ENCODE measurements at regions of chr6 and their contacts with region 1.

Region 1: DNA sequence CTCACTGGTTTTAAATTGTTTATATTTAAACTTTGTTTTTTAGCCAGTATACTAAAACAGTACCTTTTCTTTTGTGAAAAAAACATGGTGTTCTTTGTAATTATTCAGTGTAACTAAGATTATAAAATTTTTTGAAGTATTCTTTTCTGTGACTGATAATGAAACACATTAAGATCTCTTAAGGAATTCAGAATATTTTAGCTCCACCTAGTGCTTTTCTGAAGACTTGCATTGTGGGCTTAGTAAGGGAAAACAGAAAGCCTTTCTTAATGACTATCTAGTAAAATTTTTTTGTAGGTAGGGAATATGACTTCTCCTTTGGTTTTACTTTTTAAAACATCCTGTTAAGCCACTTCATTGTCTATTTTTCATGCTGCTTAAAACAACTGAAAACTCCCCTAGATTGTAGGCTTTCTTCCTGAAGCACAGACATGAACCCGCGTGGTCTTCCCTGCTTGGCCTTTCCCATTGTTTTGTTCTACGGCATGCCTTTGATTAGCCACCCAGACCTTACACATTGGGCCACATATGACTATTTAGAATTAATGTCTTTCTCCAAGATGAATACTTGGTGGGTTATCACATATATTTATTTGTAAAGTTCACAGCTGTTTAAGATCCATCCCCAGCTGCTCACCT is 72.1 kb downstream of the AFDN start:
- DNase-seq: peak in 3 of 9 donors; percentile 3 to 30 (median 19)
- ATAC-seq: no peak
- H3K4me3 ChIP-seq: no peak overlapping the region
- H3K4me3 Mint-ChIP-seq: no peak overlapping the region
- H3K27ac ChIP-seq: no peak overlapping the region
- H3K27ac Mint-ChIP-seq: no peak overlapping the region
- H3K4me1 ChIP-seq: no peaks in the 10 kb centered on the region
- H3K4me1 Mint-ChIP-seq: no peaks in the 10 kb centered on the region
- H3K27me3 ChIP-seq: no peaks in the 10 kb centered on the region
- H3K27me3 Mint-ChIP-seq: peaks cover 0 to 3% (median 0%) of the 10 kb centered on the region in 5 donors

Region 2: DNA sequence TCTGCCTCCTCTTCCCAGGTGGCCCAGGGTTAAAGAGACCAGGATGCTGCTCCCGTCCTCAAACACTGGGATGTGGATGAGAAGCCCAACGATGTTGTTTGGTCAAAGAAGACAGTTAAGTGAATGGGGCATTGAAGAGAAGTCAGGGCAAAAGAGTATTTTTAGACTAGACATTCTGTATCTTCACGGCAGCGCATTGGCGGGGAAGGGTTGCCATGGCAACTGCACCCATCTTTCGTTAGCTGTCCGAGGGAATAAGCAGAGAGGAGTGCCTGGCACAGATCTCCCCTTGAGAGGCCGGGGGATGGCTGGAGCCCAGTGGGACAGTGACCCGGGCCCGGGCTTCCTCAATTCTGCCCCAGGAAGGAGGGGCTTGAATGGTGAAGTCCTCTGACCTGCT is 684.6 kb before region 1 on chr6:
- CTCF ChIA-PET with region 1: no interaction called
- POLR2A ChIA-PET with region 1: no interaction called
- intact Hi-C with region 1: loop called (anchors 1 to 5 kb)
- DNase-seq: no peak
- ATAC-seq: no peak
- H3K4me3 ChIP-seq: no peak overlapping the region
- H3K4me3 Mint-ChIP-seq: no peak overlapping the region
- H3K27ac ChIP-seq: no peak overlapping the region
- H3K27ac Mint-ChIP-seq: no peak overlapping the region
- H3K4me1 ChIP-seq: no peaks in the 10 kb centered on the region
- H3K4me1 Mint-ChIP-seq: peaks cover 0 to 2% (median 0%) of the 10 kb centered on the region in 7 donors
- H3K27me3 ChIP-seq: no peaks in the 10 kb centered on the region
- H3K27me3 Mint-ChIP-seq: no peaks in the 10 kb centered on the region

Region 3: GRCh38 chr6:167219967-167220512 is 678.8 kb before region 1 on chr6:
- CTCF ChIA-PET with region 1: no interaction called
- POLR2A ChIA-PET with region 1: no interaction called
- intact Hi-C with region 1: loop called (anchors 1 to 5 kb)
- DNase-seq: no peak
- ATAC-seq: no peak
- H3K4me3 ChIP-seq: no peak overlapping the region
- H3K4me3 Mint-ChIP-seq: no peak overlapping the region
- H3K27ac ChIP-seq: no peak overlapping the region
- H3K27ac Mint-ChIP-seq: peak overlapping the region in 1 of 9 donors; percentile 13
- H3K4me1 ChIP-seq: no peaks in the 10 kb centered on the region
- H3K4me1 Mint-ChIP-seq: no peaks in the 10 kb centered on the region
- H3K27me3 ChIP-seq: no peaks in the 10 kb centered on the region
- H3K27me3 Mint-ChIP-seq: peaks cover 0 to 5% (median 0%) of the 10 kb centered on the region in 5 donors

Region 4: DNA sequence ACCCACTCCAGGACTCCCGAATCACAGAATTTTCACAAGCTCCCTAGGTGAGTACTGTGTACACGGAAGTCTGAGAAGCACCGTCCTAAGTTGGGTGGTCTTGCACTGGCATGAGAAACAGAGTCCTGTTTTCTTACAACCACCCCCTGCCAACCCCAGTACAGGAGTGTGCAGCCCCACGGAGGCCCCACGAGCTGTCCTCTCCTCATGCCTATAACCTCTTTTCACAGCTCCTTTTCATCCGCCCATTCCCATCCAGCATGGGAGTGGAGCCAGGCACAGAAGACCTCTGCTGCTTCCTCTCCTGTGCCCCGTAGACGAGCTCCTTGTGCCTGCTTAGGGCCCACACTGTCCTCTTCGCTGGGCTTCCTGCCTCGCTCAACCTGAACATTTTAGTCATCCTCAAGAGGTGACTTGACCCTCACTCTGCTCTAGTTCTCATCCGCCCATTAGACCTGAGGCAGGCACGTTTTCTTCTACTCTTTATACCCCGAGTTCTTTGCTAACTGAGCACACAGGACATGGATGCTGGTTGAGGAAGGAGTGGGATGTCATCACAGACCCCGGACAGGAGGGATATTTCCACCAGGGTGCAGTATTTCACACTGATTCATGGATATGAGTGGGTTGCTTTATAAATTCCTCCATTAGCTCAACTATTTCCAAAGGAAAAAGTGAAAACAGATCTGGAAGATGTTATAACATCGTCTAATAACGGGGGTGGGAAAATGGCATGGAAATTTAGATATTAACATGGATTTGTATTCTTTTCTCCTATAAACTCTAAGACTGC is 413.4 kb before region 1 on chr6:
- CTCF ChIA-PET with region 1: interaction called, 5 read pairs
- POLR2A ChIA-PET with region 1: no interaction called
- intact Hi-C with region 1: loop called in 1 of 2 experiments (anchors 1 kb)
- DNase-seq: no peak
- ATAC-seq: no peak
- H3K4me3 ChIP-seq: no peak overlapping the region
- H3K4me3 Mint-ChIP-seq: no peak overlapping the region
- H3K27ac ChIP-seq: no peak overlapping the region
- H3K27ac Mint-ChIP-seq: no peak overlapping the region
- H3K4me1 ChIP-seq: no peaks in the 10 kb centered on the region
- H3K4me1 Mint-ChIP-seq: no peaks in the 10 kb centered on the region
- H3K27me3 ChIP-seq: no peaks in the 10 kb centered on the region
- H3K27me3 Mint-ChIP-seq: peaks cover 11 to 47% (median 26%) of the 10 kb centered on the region in 5 donors

Region 5: GRCh38 chr6:167750956-167751386 is 147.8 kb before region 1 on chr6:
- CTCF ChIA-PET with region 1: no interaction called
- POLR2A ChIA-PET with region 1: no interaction called
- intact Hi-C with region 1: no loop called
- DNase-seq: no peak
- ATAC-seq: no peak
- H3K4me3 ChIP-seq: no peak overlapping the region
- H3K4me3 Mint-ChIP-seq: no peak overlapping the region
- H3K27ac ChIP-seq: no peak overlapping the region
- H3K27ac Mint-ChIP-seq: no peak overlapping the region
- H3K4me1 ChIP-seq: no peaks in the 10 kb centered on the region
- H3K4me1 Mint-ChIP-seq: peaks cover 0 to 2% (median 0%) of the 10 kb centered on the region in 7 donors
- H3K27me3 ChIP-seq: no peaks in the 10 kb centered on the region
- H3K27me3 Mint-ChIP-seq: peaks cover 0 to 19% (median 14%) of the 10 kb centered on the region in 5 donors

Region 6: GRCh38 chr6:167796192-167796996 is 102.4 kb before region 1 on chr6:
- CTCF ChIA-PET with region 1: no interaction called
- POLR2A ChIA-PET with region 1: no interaction called
- intact Hi-C with region 1: no loop called
- DNase-seq: no peak
- ATAC-seq: no peak
- H3K4me3 ChIP-seq: no peak overlapping the region
- H3K4me3 Mint-ChIP-seq: peak overlapping the region; percentile 17 to 80 (median 55)
- H3K27ac ChIP-seq: no peak overlapping the region
- H3K27ac Mint-ChIP-seq: no peak overlapping the region
- H3K4me1 ChIP-seq: no peaks in the 10 kb centered on the region
- H3K4me1 Mint-ChIP-seq: peaks cover 6 to 22% (median 14%) of the 10 kb centered on the region in 7 donors
- H3K27me3 ChIP-seq: peaks cover 0 to 5% of the 10 kb centered on the region in 2 donors
- H3K27me3 Mint-ChIP-seq: peaks cover 52 to 73% (median 61%) of the 10 kb centered on the region in 5 donors

Measured in naive thymus-derived CD4-positive, alpha-beta T cell (primary cell).